Panc1 (cell line): ENCODE measurements at regions of chr13 and their contacts with region 1.

Region 1: DNA sequence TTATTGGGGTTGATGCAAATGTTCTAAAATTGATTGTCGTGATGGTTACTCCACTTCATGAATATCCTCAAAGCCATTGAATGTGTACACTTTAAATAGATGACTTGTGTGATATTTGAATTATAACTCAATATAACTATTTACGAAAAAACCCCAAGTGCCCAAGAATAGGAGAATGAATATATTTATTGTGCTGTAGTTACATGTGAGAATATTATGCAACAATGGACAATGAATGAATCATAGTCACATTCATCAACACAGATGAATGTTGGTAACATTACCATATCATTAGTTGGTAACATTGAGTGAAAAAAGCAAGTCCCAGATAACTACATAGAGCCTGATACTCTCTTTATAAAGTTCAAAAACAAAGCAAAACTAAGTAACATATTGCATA is 127.8 kb upstream of the UBL3 start:
- DNase-seq: no peak
- ATAC-seq: no peak
- H3K4me3 ChIP-seq: no peak overlapping the region
- H3K27ac ChIP-seq: no peak overlapping the region
- H3K4me1 ChIP-seq: no peaks in the 10 kb centered on the region
- H3K27me3 ChIP-seq: no peaks in the 10 kb centered on the region
- CTCF ChIP-seq: no peak

Region 2: GRCh38 chr13:29953542-29953941 is 24.7 kb before region 1 on chr13:
- CTCF ChIA-PET with region 1: no interaction called
- POLR2A ChIA-PET with region 1: no interaction called
- in situ Hi-C with region 1: no loop called
- intact Hi-C with region 1: loop called (anchors 1 kb)
- DNase-seq: no peak
- ATAC-seq: no peak
- H3K4me3 ChIP-seq: no peak overlapping the region
- H3K27ac ChIP-seq: no peak overlapping the region
- H3K4me1 ChIP-seq: no peaks in the 10 kb centered on the region
- H3K27me3 ChIP-seq: no peaks in the 10 kb centered on the region
- CTCF ChIP-seq: no peak

Region 3: DNA sequence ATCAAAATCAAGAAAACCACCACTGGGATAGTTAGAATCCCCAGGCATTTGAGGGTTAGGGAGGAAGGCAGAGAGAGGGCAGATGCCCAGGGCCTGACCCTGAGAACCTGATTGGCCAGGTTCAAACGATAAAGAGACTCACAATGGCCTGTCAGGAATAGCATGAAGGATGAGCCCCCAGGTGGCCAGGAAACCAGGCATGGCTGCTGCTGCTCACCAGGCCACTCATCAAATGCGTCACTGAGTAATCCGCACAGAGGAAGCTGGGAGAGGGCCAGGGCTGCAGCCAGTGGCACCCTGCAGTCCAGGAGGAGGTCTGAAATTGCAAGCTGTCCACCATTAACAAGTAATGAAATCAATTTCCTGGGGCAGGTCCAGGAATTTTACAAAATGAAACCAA is 217.8 kb after region 1 on chr13:
- CTCF ChIA-PET with region 1: no interaction called
- POLR2A ChIA-PET with region 1: no interaction called
- in situ Hi-C with region 1: no loop called
- intact Hi-C with region 1: no loop called
- DNase-seq: no peak
- ATAC-seq: no peak
- H3K4me3 ChIP-seq: no peak overlapping the region
- H3K27ac ChIP-seq: no peak overlapping the region
- H3K4me1 ChIP-seq: no peaks in the 10 kb centered on the region
- H3K27me3 ChIP-seq: no peaks in the 10 kb centered on the region
- CTCF ChIP-seq: no peak